Activated CD4-positive, alpha-beta memory T cell treated with anti-CD3 and anti-CD28 coated beads for 36 hours (primary cell): ENCODE measurements at regions of chr10 and their contacts with region 1.

Region 1: DNA sequence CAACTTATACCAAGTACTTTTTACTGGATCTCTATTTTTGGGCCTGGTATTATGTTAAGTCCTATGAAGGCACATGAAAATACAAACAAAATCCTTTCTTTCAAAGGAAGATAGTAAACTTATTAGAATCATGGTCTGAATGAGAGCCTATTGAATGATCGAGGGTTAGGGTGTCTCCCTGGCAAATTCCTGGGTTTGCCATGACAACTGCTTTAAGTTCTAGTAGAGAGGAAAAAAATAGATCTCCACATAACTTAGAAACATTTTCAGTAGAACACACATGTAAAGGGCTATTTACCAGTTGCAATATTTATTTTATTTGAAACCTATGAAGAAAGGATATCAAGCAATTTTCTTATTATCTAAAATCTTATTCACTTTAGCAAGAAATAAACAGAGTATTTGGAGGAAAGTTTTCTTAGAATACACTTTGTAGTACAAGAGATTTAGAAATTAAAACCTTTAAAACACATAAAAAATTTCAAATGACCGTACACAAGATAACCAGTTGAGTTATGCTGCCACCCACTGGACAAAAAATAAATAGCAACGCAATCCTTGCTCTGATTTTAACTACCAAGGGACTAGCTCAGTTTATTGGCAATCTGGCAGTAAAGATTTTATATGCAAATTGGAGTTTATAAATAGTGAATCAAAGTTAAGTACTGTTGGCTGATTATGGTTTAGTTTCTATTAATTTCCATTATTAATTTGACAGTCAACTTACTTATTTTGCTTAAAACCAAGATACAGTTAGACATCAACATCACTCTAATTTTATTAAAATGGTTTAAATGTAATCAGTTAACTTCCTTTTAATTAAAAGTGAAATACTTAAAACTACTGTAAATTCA is 33.9 kb downstream of the CACUL1 start:
- DNase-seq: peak; percentile 47
- H3K4me3 Mint-ChIP-seq: no peak overlapping the region
- H3K27ac Mint-ChIP-seq: no peak overlapping the region
- H3K4me1 Mint-ChIP-seq: no peaks in the 10 kb centered on the region
- H3K27me3 Mint-ChIP-seq: no peaks in the 10 kb centered on the region

Region 2: DNA sequence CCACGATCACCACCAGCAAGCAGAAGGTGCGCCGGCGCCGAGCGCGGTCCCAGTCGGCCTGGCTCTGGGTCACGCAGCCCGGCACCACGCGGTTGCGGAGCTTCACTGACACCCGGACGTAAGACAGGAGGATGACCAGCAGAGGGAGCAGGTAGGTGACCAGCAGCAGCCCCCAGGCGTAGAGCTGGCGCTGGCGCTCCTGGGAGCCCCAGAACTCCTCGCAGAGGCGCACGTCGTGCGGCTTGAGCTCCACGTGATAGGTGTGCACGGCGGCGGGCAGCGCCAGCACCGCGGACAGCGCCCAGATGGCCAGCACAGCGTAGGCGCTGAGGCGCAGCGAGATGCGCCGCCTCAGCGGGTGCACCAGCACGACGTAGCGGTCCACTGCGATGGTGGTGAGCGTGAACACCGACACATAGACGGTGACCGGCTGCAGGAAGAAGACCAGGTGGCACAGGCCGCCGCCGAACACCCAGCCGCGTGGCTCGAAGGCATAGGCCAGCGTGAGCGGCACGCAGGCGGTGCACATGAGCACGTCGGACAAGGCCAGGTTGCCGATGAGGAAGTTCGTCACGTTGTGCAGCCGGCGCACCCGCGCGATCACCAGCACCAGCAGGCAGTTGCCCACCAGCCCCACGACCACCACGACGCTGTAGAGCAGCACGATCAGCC is 126.4 kb before region 1 on chr10:
- CTCF ChIA-PET with region 1: interaction called, 12 read pairs
- POLR2A ChIA-PET with region 1: no interaction called
- intact Hi-C with region 1: no loop called
- DNase-seq: peak; percentile 36
- H3K4me3 Mint-ChIP-seq: no peak overlapping the region
- H3K27ac Mint-ChIP-seq: no peak overlapping the region
- H3K4me1 Mint-ChIP-seq: peaks cover 18% of the 10 kb centered on the region
- H3K27me3 Mint-ChIP-seq: peaks cover 51% of the 10 kb centered on the region

Region 3: DNA sequence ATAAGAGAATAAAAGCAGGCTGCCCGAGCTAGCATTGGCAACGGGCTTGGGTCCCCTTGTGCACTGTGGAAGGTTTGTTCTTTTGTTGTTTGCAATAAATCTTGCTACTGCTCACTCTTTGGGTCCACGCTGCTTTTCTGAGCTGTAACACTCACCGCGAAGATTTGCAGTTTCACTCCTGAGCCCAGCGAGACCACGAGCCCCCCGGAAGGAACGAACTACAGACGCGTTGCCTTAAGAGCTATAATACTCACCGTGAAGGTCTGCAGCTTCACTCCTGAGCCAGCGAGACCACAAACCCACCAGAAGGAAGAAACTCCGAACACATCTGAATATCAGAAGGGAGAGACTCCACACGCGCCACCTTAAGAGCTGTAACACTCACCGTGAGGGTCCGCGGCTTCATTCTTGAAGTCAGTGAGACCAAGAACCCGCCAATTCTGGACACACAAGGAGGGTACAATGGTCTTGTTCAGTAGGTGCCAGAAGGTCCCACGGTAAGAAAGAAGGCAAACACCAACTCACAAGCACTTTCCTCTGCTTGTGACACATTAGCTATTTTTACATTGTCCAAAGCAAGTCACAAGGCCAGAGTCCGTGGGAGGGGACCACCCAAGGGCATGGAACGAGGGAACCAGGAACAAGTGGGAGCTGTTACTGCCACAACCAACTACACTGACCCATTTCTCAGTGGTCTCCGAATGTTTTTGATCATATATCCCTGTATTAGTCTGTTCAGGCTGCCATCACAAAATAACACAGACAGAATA is 63.0 kb after region 1 on chr10:
- CTCF ChIA-PET with region 1: no interaction called
- POLR2A ChIA-PET with region 1: no interaction called
- intact Hi-C with region 1: no loop called
- DNase-seq: no peak
- H3K4me3 Mint-ChIP-seq: no peak overlapping the region
- H3K27ac Mint-ChIP-seq: no peak overlapping the region
- H3K4me1 Mint-ChIP-seq: no peaks in the 10 kb centered on the region
- H3K27me3 Mint-ChIP-seq: peaks cover 9% of the 10 kb centered on the region

Region 4: GRCh38 chr10:118850418-118851061 is 129.6 kb after region 1 on chr10:
- CTCF ChIA-PET with region 1: no interaction called
- POLR2A ChIA-PET with region 1: no interaction called
- intact Hi-C with region 1: loop called (anchors 2 kb)
- DNase-seq: peak; percentile 88
- H3K4me3 Mint-ChIP-seq: no peak overlapping the region
- H3K27ac Mint-ChIP-seq: no peak overlapping the region
- H3K4me1 Mint-ChIP-seq: no peaks in the 10 kb centered on the region
- H3K27me3 Mint-ChIP-seq: peaks cover 2% of the 10 kb centered on the region